ENCODE measurements at regions of chr1 and their contacts with region 1.

Region 1: GRCh38 chr1:88683541-88684481 is at the start of gene PKN2:
- DNase-seq: peak; percentile 91 to 100 (median 97)
- ATAC-seq: peak; percentile 93 to 96 (median 96)
- H3K4me3 ChIP-seq: peak within 1 kb of the TSS; percentile 82 to 90
- H3K4me3 Mint-ChIP-seq: peak within 1 kb of the TSS; percentile 94 to 100 (median 97)
- H3K27ac ChIP-seq: peak within 1 kb of the TSS; percentile 87
- H3K27ac Mint-ChIP-seq: peak within 1 kb of the TSS; percentile 99
- H3K4me1 ChIP-seq: peaks cover 11 to 23% of the 10 kb centered on the region in 2 experiments
- H3K4me1 Mint-ChIP-seq: peaks cover 36 to 44% (median 43%) of the 10 kb centered on the region in 3 donors
- H3K27me3 ChIP-seq: no peaks in the 10 kb centered on the region
- H3K27me3 Mint-ChIP-seq: no peaks in the 10 kb centered on the region
- total RNA-seq, gene PKN2: 33.1 to 50.6 (median 35.9) TPM

Region 2: GRCh38 chr1:87279966-87280535 is 1403.8 kb before region 1 on chr1:
- CTCF ChIA-PET with region 1: no interaction called
- POLR2A ChIA-PET with region 1: interaction called in 1 of 2 experiments, 10 read pairs
- DNase-seq: no peak
- ATAC-seq: no peak
- H3K4me3 ChIP-seq: no peak overlapping the region
- H3K4me3 Mint-ChIP-seq: no peak overlapping the region
- H3K27ac ChIP-seq: no peak overlapping the region
- H3K27ac Mint-ChIP-seq: no peak overlapping the region
- H3K4me1 ChIP-seq: no peaks in the 10 kb centered on the region
- H3K4me1 Mint-ChIP-seq: no peaks in the 10 kb centered on the region
- H3K27me3 ChIP-seq: peaks cover 0 to 4% of the 10 kb centered on the region in 2 experiments
- H3K27me3 Mint-ChIP-seq: peaks cover 10 to 17% of the 10 kb centered on the region in 2 donors

Region 3: GRCh38 chr1:88655685-88656299 is 28.0 kb before region 1 on chr1:
- CTCF ChIA-PET with region 1: interaction called, 10 to 32 read pairs
- POLR2A ChIA-PET with region 1: interaction called in 1 of 2 experiments, 7 read pairs
- DNase-seq: peak in 1 of 35 experiments; percentile 65
- ATAC-seq: no peak
- H3K4me3 ChIP-seq: no peak overlapping the region
- H3K4me3 Mint-ChIP-seq: no peak overlapping the region
- H3K27ac ChIP-seq: no peak overlapping the region
- H3K27ac Mint-ChIP-seq: no peak overlapping the region
- H3K4me1 ChIP-seq: peaks cover 0 to 6% of the 10 kb centered on the region in 2 experiments
- H3K4me1 Mint-ChIP-seq: peaks cover 11 to 14% (median 12%) of the 10 kb centered on the region in 3 donors
- H3K27me3 ChIP-seq: no peaks in the 10 kb centered on the region
- H3K27me3 Mint-ChIP-seq: no peaks in the 10 kb centered on the region

Region 4: DNA sequence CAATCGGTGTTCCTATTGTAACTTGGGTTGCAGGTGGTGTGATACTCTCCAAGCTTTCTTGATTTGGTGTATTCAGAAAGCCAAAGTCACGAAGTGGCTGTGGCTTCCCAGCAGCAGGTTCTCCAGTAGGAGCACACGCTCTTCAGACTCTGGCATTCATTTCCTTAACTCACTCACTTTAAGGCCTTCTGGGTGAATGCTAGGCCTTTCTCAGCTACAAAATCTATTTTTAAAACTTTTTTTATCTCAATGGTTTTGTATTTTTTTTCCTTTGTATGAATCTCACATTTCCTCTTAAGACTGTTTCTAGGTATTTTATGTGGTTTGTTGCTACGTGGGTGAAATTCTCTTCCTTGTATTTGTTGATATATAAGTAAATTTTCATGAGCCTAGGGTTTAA is 22.6 kb before region 1 on chr1:
- CTCF ChIA-PET with region 1: interaction called, 10 to 32 read pairs
- POLR2A ChIA-PET with region 1: interaction called in 1 of 2 experiments, 3 read pairs
- DNase-seq: peak in 1 of 35 experiments; percentile 26
- ATAC-seq: peak in 3 of 4 experiments; percentile 19 to 79 (median 43)
- H3K4me3 ChIP-seq: peak overlapping the region; percentile 4 to 33
- H3K4me3 Mint-ChIP-seq: peak overlapping the region; percentile 31 to 65 (median 61)
- H3K27ac ChIP-seq: no peak overlapping the region
- H3K27ac Mint-ChIP-seq: peak overlapping the region; percentile 87 to 88
- H3K4me1 ChIP-seq: peaks cover 3 to 19% of the 10 kb centered on the region in 2 experiments
- H3K4me1 Mint-ChIP-seq: peaks cover 28 to 29% (median 29%) of the 10 kb centered on the region in 3 donors
- H3K27me3 ChIP-seq: no peaks in the 10 kb centered on the region
- H3K27me3 Mint-ChIP-seq: no peaks in the 10 kb centered on the region

Region 5: DNA sequence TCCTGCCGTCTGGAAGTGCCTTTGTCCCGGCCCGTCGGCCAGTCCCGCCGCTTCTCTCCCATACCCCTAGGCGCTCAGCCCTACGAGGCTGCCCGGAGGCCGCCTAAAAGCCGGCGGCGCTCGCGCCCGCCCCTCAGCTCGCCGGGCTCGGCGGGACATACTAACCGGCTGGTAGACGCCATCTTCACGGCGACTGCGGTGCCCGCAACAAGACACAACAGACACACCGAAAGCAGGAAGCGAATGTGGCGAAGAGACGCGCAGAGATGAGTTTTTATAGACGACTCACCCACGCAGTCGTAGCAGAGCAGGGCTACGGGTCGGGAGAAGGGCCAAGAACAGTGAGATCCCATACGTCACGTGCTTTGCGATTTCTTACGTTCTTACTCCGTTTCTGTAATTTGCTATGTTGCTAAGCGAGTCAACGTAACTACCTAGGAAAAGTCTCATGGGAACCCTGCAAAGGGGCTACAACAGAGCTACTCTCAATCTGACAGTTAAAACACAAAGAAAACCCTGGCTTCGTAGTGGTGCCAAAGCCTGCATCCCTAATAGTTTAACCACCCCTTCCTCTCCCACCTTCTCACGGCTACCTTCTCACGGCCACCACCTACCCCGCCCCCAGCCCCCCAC is 207.6 kb after region 1 on chr1 and contains the start of gene GTF2B:
- CTCF ChIA-PET with region 1: no interaction called
- POLR2A ChIA-PET with region 1: interaction called in 1 of 2 experiments, 10 read pairs
- DNase-seq: peak; percentile 84 to 98 (median 93)
- ATAC-seq: peak; percentile 87 to 93 (median 90)
- H3K4me3 ChIP-seq: peak within 1 kb of the TSS; percentile 94 to 100
- H3K4me3 Mint-ChIP-seq: peak within 1 kb of the TSS; percentile 86 to 99 (median 97)
- H3K27ac ChIP-seq: peak within 1 kb of the TSS; percentile 86
- H3K27ac Mint-ChIP-seq: peak within 1 kb of the TSS; percentile 93 to 98
- H3K4me1 ChIP-seq: peaks cover 14 to 22% of the 10 kb centered on the region in 2 experiments
- H3K4me1 Mint-ChIP-seq: peaks cover 44 to 46% (median 45%) of the 10 kb centered on the region in 3 donors
- H3K27me3 ChIP-seq: no peaks in the 10 kb centered on the region
- H3K27me3 Mint-ChIP-seq: no peaks in the 10 kb centered on the region
- total RNA-seq, gene GTF2B: 34.2 to 54.5 (median 38.7) TPM

Measured in T-cell (primary cell).